Heart right ventricle (tissue), 16 donors: ENCODE measurements at regions of chr22 and their contacts with region 1.

Region 1: DNA sequence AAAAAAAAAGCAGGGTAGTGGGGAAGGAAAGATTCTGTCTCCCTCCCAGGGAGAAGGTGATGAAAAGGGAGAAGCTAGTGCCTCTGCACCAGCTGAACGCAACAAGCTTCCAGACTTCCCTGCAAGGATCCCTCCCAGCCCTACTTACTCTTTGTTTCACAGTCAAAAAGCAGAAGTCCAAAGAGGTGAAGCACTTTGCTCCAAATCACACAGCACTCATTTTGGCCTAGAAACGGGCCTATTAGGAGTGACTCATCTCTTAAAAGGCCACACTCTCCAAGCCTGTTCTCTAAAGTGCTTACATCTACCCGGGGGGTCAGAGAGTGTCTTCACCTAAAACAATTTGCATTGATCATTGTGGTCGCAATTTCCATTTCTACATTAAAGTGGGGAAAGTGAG is 17.7 kb upstream of the GRK3 start:
- DNase-seq: no peak
- ATAC-seq: peak in 1 of 8 donors; percentile 50
- H3K4me3 ChIP-seq: no peak overlapping the region
- H3K27ac ChIP-seq: peak overlapping the region in 1 of 10 donors; percentile 14
- H3K4me1 ChIP-seq: peaks cover 0 to 23% (median 0%) of the 10 kb centered on the region in 9 donors
- H3K27me3 ChIP-seq: no peaks in the 10 kb centered on the region
- CTCF ChIP-seq: no peak

Region 2: DNA sequence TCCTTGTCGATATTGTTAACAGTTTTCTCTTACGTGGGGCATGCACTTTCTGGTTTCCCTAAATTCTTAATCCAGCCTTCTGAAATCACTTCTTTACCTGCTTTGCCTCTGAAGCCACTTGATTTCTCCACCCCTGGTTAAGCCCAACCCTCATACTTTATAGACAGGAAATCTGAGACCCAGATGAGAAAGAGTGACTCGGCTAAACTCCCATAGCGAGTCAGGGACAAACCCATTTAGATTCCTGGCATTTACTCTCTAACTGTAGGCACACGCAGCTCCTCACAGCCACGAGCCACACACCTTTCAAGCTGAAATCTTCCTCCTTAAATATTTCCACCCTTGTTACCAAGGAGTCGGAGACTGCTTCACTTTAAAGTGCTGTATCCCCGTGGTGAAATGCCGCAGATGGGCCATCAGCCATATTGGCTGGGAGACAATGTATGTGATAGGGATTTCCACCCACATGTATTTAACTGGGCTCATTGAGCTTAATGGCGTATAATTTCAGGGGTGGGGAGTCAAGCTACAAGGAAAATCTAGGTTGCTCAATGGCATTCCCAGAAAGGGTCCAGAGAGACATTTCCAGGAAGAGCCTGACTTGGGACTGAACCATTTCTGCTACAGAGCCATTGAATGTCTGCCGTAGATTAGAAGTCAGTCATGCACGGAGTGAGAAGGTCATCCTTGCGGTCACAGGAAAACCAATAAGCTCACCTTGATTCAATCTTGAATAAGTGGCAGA is 32.1 kb before region 1 on chr22:
- intact Hi-C with region 1: no loop called
- DNase-seq: no peak
- ATAC-seq: no peak
- H3K4me3 ChIP-seq: no peak overlapping the region
- H3K27ac ChIP-seq: no peak overlapping the region
- H3K4me1 ChIP-seq: no peaks in the 10 kb centered on the region
- H3K27me3 ChIP-seq: no peaks in the 10 kb centered on the region
- CTCF ChIP-seq: no peak

Region 3: GRCh38 chr22:25689633-25690032 is 142.9 kb after region 1 on chr22:
- intact Hi-C with region 1: loop called in 3 of 10 experiments (anchors 5 to 10 kb)
- DNase-seq: no peak
- ATAC-seq: no peak
- H3K4me3 ChIP-seq: no peak overlapping the region
- H3K27ac ChIP-seq: no peak overlapping the region
- H3K4me1 ChIP-seq: peaks cover 0 to 11% (median 0%) of the 10 kb centered on the region in 9 donors
- H3K27me3 ChIP-seq: no peaks in the 10 kb centered on the region
- CTCF ChIP-seq: no peak

Region 4: DNA sequence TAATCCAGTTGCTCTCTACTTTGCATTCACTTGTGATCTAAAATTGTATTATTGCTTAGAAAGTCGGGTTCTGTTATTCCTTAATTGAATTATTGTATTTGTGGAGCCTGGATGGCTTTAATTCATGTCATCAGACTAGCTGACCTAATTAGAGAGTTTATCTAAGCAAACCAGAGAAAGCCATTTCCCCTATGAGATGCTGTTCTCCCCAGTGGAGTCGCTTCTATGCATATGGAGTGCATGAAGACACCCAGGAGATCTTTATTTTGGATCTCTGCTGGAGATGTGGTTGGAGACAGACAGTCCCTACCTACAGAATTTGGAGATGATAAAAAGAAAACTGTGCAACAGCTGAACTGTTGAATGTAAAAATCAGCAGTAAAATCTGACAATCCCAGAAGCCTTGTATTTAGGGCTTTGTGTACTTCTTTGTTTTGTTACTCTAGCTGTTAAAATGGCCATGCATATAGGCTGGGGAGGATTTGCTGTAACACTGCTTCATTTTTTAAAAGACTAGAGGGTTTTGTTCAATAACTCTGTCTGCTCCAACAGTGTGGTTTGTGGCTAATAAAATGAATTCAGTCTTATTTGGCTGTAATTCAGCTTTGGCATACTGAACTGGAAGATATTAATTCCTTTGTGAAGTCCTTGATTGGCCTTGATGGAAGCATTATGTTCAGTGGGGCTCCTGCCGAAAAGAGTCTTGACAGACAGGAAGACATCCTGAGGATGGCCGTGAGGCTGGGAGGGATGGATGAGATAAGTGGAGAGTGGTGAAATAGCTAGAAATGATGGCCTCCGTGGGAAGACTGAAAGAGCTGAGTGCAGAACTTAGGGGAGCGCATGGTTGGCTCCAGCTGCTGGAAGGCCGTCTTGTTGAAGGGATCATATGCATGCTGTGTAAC is 150.3 kb after region 1 on chr22:
- intact Hi-C with region 1: loop called in 5 of 10 experiments (anchors 5 to 10 kb)
- DNase-seq: no peak
- ATAC-seq: no peak
- H3K4me3 ChIP-seq: no peak overlapping the region
- H3K27ac ChIP-seq: no peak overlapping the region
- H3K4me1 ChIP-seq: peaks cover 0 to 29% (median 24%) of the 10 kb centered on the region in 9 donors
- H3K27me3 ChIP-seq: no peaks in the 10 kb centered on the region
- CTCF ChIP-seq: no peak

Region 5: GRCh38 chr22:25702040-25702439 is 155.3 kb after region 1 on chr22:
- intact Hi-C with region 1: loop called in 5 of 10 experiments (anchors 5 to 10 kb)
- DNase-seq: no peak
- ATAC-seq: peak in 5 of 8 donors; percentile 46 to 76 (median 53)
- H3K4me3 ChIP-seq: no peak overlapping the region
- H3K27ac ChIP-seq: peak overlapping the region in 2 of 10 donors; percentile 37 to 51
- H3K4me1 ChIP-seq: peaks cover 0 to 31% (median 16%) of the 10 kb centered on the region in 9 donors
- H3K27me3 ChIP-seq: no peaks in the 10 kb centered on the region
- CTCF ChIP-seq: peak in 8 of 9 donors; percentile 23 to 70 (median 52)